AG04449 (cell line): ENCODE measurements at regions of chr2 and their contacts with region 1.

Region 1: DNA sequence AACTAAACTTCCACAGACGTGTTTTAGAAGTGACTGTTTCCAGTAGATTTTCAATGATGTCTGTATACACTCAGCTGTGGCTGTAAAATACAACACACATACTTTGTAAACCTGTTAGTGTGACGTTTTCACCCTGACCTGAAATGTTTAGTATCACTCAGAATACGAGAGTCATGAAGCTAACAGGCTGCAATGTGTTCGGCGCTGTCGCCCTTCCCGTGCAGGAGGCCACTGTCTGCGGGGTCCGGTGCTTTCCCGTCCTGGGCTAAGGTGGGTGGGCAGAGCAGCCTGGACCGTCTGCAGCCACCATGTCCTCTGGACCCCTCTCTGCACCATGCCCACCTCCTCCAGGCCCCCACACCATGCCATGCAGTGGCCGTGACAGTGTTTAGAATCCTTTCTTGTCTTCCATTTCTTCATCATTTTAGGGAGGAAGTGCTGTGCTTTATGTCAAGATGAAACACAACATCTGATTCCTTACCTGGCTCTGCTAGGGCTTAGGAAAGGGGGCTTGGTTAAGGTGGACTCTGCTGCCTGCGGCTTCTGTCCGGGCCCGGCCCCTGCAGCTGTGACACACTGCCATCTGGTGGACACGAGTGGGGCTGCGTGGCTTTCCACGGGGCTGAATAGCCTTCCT is 53.8 kb upstream of the RBM44 start:
- DNase-seq: no peak
- H3K4me3 ChIP-seq: no peak overlapping the region
- CTCF ChIP-seq: peak; percentile 94

Region 2: DNA sequence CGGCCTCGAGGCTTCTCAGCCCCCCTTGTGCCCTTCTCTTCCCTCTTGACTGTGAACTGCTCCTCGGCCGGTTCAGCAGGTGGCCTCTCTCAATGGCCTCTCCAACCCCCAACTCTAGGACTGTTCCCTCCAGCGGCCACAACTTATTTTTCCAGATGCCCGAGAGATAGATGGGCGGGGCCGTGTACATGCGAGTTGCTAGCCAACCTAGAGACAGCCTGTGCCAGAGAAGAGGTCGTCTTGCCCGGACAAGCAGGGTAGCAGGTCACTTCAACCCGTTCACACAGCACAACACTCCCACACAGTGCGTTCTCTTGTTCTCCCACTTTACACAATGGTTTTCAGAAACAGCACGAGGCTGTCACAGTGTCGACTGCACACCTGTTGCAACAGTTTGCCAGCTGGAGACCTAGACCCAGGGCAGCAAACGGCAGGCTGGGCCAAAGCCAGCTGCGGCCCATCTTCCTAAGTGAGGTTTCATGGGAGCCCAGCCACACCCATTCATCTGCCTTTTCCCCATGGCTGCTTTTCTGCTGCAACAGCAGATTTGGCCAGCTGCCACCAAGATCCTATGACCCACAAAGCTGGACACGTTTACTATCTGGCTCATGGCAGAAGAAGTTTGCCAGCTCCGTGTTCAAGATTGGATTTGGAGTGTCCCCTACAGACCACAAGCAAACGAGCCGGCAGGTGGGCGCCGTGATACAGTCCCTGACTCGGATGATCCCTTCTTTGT is 185.7 kb before region 1 on chr2:
- CTCF ChIA-PET with region 1: interaction called, 10 read pairs
- POLR2A ChIA-PET with region 1: no interaction called
- DNase-seq: no peak
- H3K4me3 ChIP-seq: no peak overlapping the region
- CTCF ChIP-seq: no peak

Region 3: GRCh38 chr2:237603718-237604362 is 140.9 kb before region 1 on chr2:
- CTCF ChIA-PET with region 1: interaction called, 29 read pairs
- POLR2A ChIA-PET with region 1: interaction called, 4 read pairs
- DNase-seq: no peak
- H3K4me3 ChIP-seq: no peak overlapping the region
- CTCF ChIP-seq: no peak

Region 4: GRCh38 chr2:237660380-237660904 is 84.3 kb before region 1 on chr2:
- CTCF ChIA-PET with region 1: interaction called, 10 read pairs
- POLR2A ChIA-PET with region 1: no interaction called
- DNase-seq: no peak
- H3K4me3 ChIP-seq: no peak overlapping the region
- CTCF ChIP-seq: no peak

Region 5: GRCh38 chr2:237691908-237692600 is 52.7 kb before region 1 on chr2:
- CTCF ChIA-PET with region 1: interaction called, 41 read pairs
- POLR2A ChIA-PET with region 1: interaction called, 6 read pairs
- DNase-seq: no peak
- H3K4me3 ChIP-seq: peak overlapping the region; percentile 78
- CTCF ChIP-seq: no peak

Region 6: GRCh38 chr2:237731663-237732062 is 13.1 kb before region 1 on chr2:
- CTCF ChIA-PET with region 1: interaction called, 134 read pairs
- POLR2A ChIA-PET with region 1: no interaction called
- DNase-seq: no peak
- H3K4me3 ChIP-seq: no peak overlapping the region
- CTCF ChIP-seq: no peak

Region 7: GRCh38 chr2:237935740-237936452 is 191.2 kb after region 1 on chr2:
- CTCF ChIA-PET with region 1: no interaction called
- POLR2A ChIA-PET with region 1: no interaction called
- DNase-seq: no peak
- H3K4me3 ChIP-seq: no peak overlapping the region
- CTCF ChIP-seq: no peak